ENCODE measurements at regions of chr2 and their contacts with region 1.

Region 1: DNA sequence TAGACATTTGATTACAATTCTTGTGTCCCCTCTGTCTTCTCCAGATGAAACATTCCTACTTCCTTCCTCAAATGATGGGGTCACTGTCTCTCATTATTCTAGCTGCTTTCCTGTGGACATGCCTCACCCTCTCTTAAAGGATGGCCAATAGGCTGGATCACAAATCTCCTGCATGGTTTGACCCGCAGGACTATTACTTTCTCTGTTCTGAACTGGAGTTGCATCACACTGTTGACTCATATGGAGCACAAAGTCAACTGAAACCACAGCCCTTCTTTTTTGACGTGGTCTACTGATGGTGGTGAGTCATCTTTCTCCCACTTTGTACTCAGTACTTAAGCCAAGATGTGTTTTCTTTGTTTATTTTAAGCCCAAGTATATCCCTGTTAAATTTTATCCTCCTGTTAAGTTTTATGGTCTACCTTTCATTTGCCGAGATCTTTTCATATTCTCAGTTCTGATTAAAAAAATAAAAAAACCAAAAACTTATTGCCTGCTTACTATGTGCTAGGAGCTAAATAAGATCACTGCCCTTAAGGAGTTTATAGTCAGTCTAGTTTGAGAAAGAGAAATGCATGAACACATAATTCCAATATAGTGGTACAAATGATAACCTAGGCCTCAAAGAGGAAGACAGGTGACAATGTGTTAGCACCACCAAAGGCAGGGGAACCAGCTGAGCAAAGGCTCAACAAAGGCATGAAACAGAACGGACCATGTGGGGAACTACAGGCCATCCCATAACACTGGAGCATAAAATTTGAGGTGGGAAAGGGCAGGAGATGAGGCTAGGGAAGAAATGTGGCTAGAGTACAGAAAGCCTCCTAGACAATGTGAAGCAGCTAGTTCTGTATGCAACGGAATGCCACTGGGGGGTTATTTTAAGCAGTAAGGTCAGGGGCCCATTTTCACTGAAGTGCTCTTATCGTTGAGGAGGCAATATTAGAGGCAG is 67.6 kb upstream of the ZFP36L2 start:
- DNase-seq: peak; percentile 90
- ATAC-seq: peak; percentile 98
- H3K4me3 ChIP-seq: peak overlapping the region; percentile 6; the same call in 1 of the 2 replicates
- H3K27ac ChIP-seq: peak overlapping the region; percentile 78
- H3K4me1 ChIP-seq: peaks cover 21% of the 10 kb centered on the region
- H3K27me3 ChIP-seq: no peaks in the 10 kb centered on the region
- CTCF ChIP-seq: no peak
- EP300 ChIP-seq: peak; percentile 87 to 88; a peak in 3 of 4 replicates
- POLR2A ChIP-seq: no peak
- RAD21 ChIP-seq: 0 out of 2 replicates have a peak, but pooled peaks have one; percentile 5

Region 2: GRCh38 chr2:43402452-43402944 is 108.5 kb after region 1 on chr2:
- CTCF ChIA-PET with region 1: interaction called, 3 read pairs
- POLR2A ChIA-PET with region 1: interaction called, 3 read pairs
- RAD21 ChIA-PET with region 1: interaction called, 8 read pairs
- SMC1A ChIA-PET with region 1: interaction called, 19 read pairs
- in situ Hi-C with region 1: no loop called
- intact Hi-C with region 1: loop called (anchors 2 kb)
- DNase-seq: peak; percentile 79
- ATAC-seq: peak; percentile 73
- H3K4me3 ChIP-seq: peak overlapping the region; percentile 40
- H3K27ac ChIP-seq: peak overlapping the region; percentile 97
- H3K4me1 ChIP-seq: peaks cover 64% of the 10 kb centered on the region
- H3K27me3 ChIP-seq: no peaks in the 10 kb centered on the region
- CTCF ChIP-seq: no peak
- EP300 ChIP-seq: peak in 1 of 2 experiments; percentile 22; a peak in 1 of 4 replicates
- POLR2A ChIP-seq: peak; percentile 38
- RAD21 ChIP-seq: peak; percentile 34

Region 3: GRCh38 chr2:43542285-43542937 is 248.4 kb after region 1 on chr2:
- CTCF ChIA-PET with region 1: no interaction called
- POLR2A ChIA-PET with region 1: no interaction called
- RAD21 ChIA-PET with region 1: no interaction called
- SMC1A ChIA-PET with region 1: no interaction called
- in situ Hi-C with region 1: no loop called
- intact Hi-C with region 1: no loop called
- DNase-seq: no peak
- ATAC-seq: peak; percentile 76
- H3K4me3 ChIP-seq: no peak overlapping the region
- H3K27ac ChIP-seq: no peak overlapping the region
- H3K4me1 ChIP-seq: no peaks in the 10 kb centered on the region
- H3K27me3 ChIP-seq: no peaks in the 10 kb centered on the region
- CTCF ChIP-seq: peak; percentile 36 to 58 (median 45); a peak in 3 of 6 replicates
- EP300 ChIP-seq: no peak
- POLR2A ChIP-seq: no peak
- RAD21 ChIP-seq: peak; percentile 61